Right cardiac atrium (tissue), 5 donors: ENCODE measurements at regions of chr1 and their contacts with region 1.

Region 1: DNA sequence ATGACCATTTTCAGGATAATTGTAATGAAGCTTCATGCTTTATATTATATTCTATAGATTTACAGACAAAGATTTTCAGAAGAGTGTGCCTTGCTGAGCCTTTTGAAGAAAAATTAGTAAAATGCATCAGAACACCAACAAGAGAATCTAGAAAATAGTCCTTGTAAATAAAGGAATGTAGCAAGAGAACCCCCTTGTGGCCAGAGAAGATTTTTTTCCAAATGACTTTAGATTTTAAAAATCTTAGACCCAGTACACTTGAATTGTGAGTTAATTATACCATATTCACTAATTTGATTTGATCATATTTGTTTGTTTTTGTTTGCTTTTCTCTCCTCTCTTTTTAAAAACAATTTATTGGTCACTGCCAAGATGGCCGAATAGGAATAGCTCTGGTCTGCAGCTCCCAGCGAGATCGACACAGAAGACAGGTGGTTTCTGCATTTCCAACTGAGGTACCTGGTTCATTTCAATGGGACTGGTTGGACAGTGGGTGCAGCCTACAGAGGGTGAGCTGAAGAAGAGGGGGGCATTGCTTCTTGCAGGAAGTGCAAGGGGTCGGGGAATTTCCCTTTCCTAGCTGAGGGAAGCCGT is 12.8 kb upstream of the IFI44L start:
- DNase-seq: no peak
- ATAC-seq: no peak
- H3K4me3 ChIP-seq: no peak overlapping the region
- H3K27ac ChIP-seq: no peak overlapping the region
- H3K4me1 ChIP-seq: no peaks in the 10 kb centered on the region
- H3K27me3 ChIP-seq: no peaks in the 10 kb centered on the region

Region 2: DNA sequence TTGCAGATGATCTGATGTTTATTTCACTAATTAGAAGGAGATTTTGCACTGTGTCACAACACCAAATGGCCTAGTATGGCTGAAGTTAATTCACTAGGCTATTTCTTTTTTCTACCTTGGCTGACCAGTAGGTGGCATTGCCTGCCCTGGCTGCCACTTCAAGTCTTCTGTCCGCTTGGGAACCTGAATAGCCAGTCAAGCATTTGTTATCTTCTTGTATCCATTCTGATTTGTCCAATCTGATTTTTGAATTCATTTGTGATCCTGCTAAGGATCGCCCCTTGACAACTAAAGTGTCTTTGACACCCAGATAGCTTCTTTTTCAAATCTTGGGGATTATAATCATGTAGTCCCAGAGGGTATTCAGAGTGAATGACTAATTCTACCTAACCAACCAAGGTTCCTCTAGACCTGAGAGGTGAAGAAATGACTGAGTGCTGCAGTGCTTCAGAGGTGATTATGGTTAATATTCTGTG is 462.3 kb before region 1 on chr1:
- intact Hi-C with region 1: loop called (anchors 5 to 10 kb)
- DNase-seq: peak in 2 of 3 donors; percentile 34 to 55
- ATAC-seq: peak; percentile 58 to 59
- H3K4me3 ChIP-seq: no peak overlapping the region
- H3K27ac ChIP-seq: no peak overlapping the region
- H3K4me1 ChIP-seq: no peaks in the 10 kb centered on the region
- H3K27me3 ChIP-seq: no peaks in the 10 kb centered on the region